ENCODE measurements at regions of chr19 and their contacts with region 1.

Region 1: GRCh38 chr19:9584073-9584833 is at the start of gene ZNF121:
- DNase-seq: peak; percentile 77
- H3K4me3 Mint-ChIP-seq: peak within 1 kb of the TSS; percentile 91
- H3K27ac Mint-ChIP-seq: peak within 1 kb of the TSS; percentile 92
- H3K4me1 Mint-ChIP-seq: peaks cover 12% of the 10 kb centered on the region
- H3K27me3 Mint-ChIP-seq: peaks cover 2% of the 10 kb centered on the region
- total RNA-seq, gene ZNF121: 57.2 and 62.2 TPM in 2 replicates

Region 2: GRCh38 chr19:9538183-9539058 is 45.8 kb before region 1 on chr19 and contains the start of gene ZNF426:
- intact Hi-C with region 1: loop called (anchors 2 kb)
- DNase-seq: peak; percentile 76
- H3K4me3 Mint-ChIP-seq: peak within 1 kb of the TSS; percentile 93
- H3K27ac Mint-ChIP-seq: peak within 1 kb of the TSS; percentile 95
- H3K4me1 Mint-ChIP-seq: peaks cover 5% of the 10 kb centered on the region
- H3K27me3 Mint-ChIP-seq: no peaks in the 10 kb centered on the region
- total RNA-seq, gene ZNF426: 10.4 and 10.5 TPM in 2 replicates

Region 3: GRCh38 chr19:9645472-9645871 is 61.2 kb after region 1 on chr19:
- intact Hi-C with region 1: no loop called
- DNase-seq: no peak
- H3K4me3 Mint-ChIP-seq: no peak overlapping the region
- H3K27ac Mint-ChIP-seq: no peak overlapping the region
- H3K4me1 Mint-ChIP-seq: no peaks in the 10 kb centered on the region
- H3K27me3 Mint-ChIP-seq: no peaks in the 10 kb centered on the region

Measured in activated T-helper 2 cell treated with anti-CD3 and anti-CD28 coated beads, Interferon-gamma antibody, Interleukin-2, Interleukin-4, amounts not matched to agents 10 μg/mL and 5 μg/mL and 100 μg/mL, durations not matched to agents 14 hours and 24 hours and 36 hours (primary cell).